ENCODE measurements at regions of chr15 and their contacts with region 1.

Region 1: GRCh38 chr15:20659265-20659664 is 117.7 kb upstream of the GOLGA6L6 start:
- DNase-seq: no peak
- ATAC-seq: no peak
- H3K4me3 Mint-ChIP-seq: no peak overlapping the region
- H3K27ac Mint-ChIP-seq: no peak overlapping the region
- H3K4me1 Mint-ChIP-seq: no peaks in the 10 kb centered on the region
- H3K27me3 Mint-ChIP-seq: no peaks in the 10 kb centered on the region

Region 2: DNA sequence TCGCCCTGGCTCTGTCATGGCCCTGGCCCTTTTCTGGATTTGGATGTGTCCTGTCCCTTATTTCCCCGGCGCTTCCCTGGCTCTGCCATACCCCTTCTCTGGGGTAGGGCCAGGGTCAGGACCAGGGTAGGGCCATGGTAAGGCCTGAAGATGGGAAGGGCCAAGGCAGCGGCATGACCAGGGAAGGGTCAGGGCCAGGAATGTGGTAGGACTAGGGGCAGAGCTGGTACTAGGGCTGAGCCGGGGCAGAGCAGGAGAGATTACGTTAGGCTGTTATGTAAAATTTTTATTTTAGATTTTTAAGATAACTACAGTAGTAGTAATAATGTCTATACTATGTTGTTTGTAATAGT is 354.2 kb before region 1 on chr15:
- CTCF ChIA-PET with region 1: no interaction called
- POLR2A ChIA-PET with region 1: no interaction called
- intact Hi-C with region 1: no loop called
- DNase-seq: no peak
- ATAC-seq: no peak
- H3K4me3 Mint-ChIP-seq: no peak overlapping the region
- H3K27ac Mint-ChIP-seq: no peak overlapping the region
- H3K4me1 Mint-ChIP-seq: no peaks in the 10 kb centered on the region
- H3K27me3 Mint-ChIP-seq: no peaks in the 10 kb centered on the region

Region 3: DNA sequence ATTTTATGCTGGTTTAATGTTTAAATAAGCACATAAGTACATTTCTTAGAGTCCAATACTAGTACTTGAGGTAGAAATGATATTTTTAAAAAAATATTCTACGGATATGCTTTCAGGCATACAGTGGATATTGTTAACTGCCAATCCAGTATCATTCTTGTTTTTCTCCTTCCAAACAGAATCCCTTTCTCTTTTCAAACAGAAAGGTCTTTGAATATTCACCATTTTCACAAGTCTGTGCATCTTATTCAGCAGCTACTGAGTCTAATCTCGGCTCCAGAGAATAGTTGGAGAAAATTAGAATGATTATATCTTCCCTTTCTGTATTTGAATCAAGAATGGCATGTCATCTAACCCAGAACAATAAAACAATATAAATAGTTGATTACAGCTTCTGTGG is 292.2 kb before region 1 on chr15:
- CTCF ChIA-PET with region 1: no interaction called
- POLR2A ChIA-PET with region 1: no interaction called
- intact Hi-C with region 1: loop called in 1 of 2 experiments (anchors 5 kb)
- DNase-seq: no peak
- ATAC-seq: no peak
- H3K4me3 Mint-ChIP-seq: no peak overlapping the region
- H3K27ac Mint-ChIP-seq: no peak overlapping the region
- H3K4me1 Mint-ChIP-seq: no peaks in the 10 kb centered on the region
- H3K27me3 Mint-ChIP-seq: no peaks in the 10 kb centered on the region

Region 4: GRCh38 chr15:20386198-20386597 is 273.1 kb before region 1 on chr15:
- CTCF ChIA-PET with region 1: no interaction called
- POLR2A ChIA-PET with region 1: no interaction called
- intact Hi-C with region 1: no loop called
- DNase-seq: no peak
- ATAC-seq: no peak
- H3K4me3 Mint-ChIP-seq: no peak overlapping the region
- H3K27ac Mint-ChIP-seq: no peak overlapping the region
- H3K4me1 Mint-ChIP-seq: no peaks in the 10 kb centered on the region
- H3K27me3 Mint-ChIP-seq: no peaks in the 10 kb centered on the region

Region 5: DNA sequence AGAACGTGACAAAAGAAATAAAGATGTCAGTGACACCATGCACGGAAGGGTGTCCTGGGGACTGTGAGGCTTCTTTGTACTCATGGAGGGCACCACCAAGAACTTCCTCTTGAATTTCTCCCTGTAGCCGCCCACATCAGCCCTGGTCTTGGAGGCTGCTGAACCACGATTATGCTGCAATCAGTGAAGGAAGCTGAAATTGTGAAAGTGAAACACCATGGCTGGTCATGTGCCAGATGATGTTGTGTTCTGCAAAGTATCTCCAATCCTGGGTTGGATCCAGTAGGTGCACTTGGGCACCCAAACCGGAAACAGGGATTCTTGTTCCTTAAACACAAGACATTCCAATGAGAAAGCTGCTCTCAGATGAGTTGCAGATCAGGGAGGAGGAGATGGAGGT is 13.3 kb before region 1 on chr15:
- CTCF ChIA-PET with region 1: interaction called, 6 read pairs
- POLR2A ChIA-PET with region 1: no interaction called
- intact Hi-C with region 1: loop called (anchors 1 kb)
- DNase-seq: peak; percentile 61
- ATAC-seq: peak; percentile 78
- H3K4me3 Mint-ChIP-seq: no peak overlapping the region
- H3K27ac Mint-ChIP-seq: no peak overlapping the region
- H3K4me1 Mint-ChIP-seq: no peaks in the 10 kb centered on the region
- H3K27me3 Mint-ChIP-seq: peaks cover 17% of the 10 kb centered on the region

Region 6: DNA sequence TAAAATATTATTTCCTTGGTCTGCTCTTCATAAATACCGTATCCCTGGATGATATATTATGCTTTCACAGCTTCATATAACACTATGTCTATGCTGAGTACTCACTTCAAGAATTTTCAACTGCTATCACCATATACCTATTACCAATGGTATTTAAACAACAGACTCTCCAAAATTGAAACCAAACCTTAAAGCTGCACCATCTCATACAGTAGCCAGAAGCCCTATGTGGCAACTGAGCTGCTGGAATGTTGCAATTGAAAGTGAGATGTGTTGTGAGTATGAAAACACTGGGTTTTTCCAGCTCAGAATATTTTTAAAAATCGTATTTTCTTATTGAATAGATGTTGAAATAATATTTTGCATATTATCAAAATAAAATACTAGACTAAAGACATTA is 12.4 kb after region 1 on chr15:
- CTCF ChIA-PET with region 1: interaction called, 11 read pairs
- POLR2A ChIA-PET with region 1: no interaction called
- intact Hi-C with region 1: loop called in 1 of 2 experiments (anchors 2 kb)
- DNase-seq: no peak
- ATAC-seq: no peak
- H3K4me3 Mint-ChIP-seq: no peak overlapping the region
- H3K27ac Mint-ChIP-seq: no peak overlapping the region
- H3K4me1 Mint-ChIP-seq: no peaks in the 10 kb centered on the region
- H3K27me3 Mint-ChIP-seq: peaks cover 2% of the 10 kb centered on the region